SK-N-SH (cell line): ENCODE measurements at regions of chr12 and their contacts with region 1.

Region 1: GRCh38 chr12:8544295-8544694 is 3.6 kb upstream of the CLEC4E start:
- DNase-seq: peak; percentile 49
- H3K4me3 ChIP-seq: peak overlapping the region in 1 of 2 experiments; percentile 45; a peak in 1 of 4 replicates
- H3K27ac ChIP-seq: no peak overlapping the region
- H3K4me1 ChIP-seq: no peaks in the 10 kb centered on the region
- H3K27me3 ChIP-seq: no peaks in the 10 kb centered on the region; the same call in 1 of the 2 replicates
- CTCF ChIP-seq: peak; percentile 97
- EP300 ChIP-seq: no peak
- RAD21 ChIP-seq: peak; percentile 68

Region 2: GRCh38 chr12:8527250-8528130 is 16.8 kb before region 1 on chr12:
- CTCF ChIA-PET with region 1: interaction called, 23 read pairs
- POLR2A ChIA-PET with region 1: no interaction called
- DNase-seq: no peak
- H3K4me3 ChIP-seq: no peak overlapping the region
- H3K27ac ChIP-seq: no peak overlapping the region
- H3K4me1 ChIP-seq: no peaks in the 10 kb centered on the region
- H3K27me3 ChIP-seq: no peaks in the 10 kb centered on the region; the same call in 1 of the 2 replicates
- CTCF ChIP-seq: no peak
- EP300 ChIP-seq: no peak
- RAD21 ChIP-seq: no peak

Region 3: DNA sequence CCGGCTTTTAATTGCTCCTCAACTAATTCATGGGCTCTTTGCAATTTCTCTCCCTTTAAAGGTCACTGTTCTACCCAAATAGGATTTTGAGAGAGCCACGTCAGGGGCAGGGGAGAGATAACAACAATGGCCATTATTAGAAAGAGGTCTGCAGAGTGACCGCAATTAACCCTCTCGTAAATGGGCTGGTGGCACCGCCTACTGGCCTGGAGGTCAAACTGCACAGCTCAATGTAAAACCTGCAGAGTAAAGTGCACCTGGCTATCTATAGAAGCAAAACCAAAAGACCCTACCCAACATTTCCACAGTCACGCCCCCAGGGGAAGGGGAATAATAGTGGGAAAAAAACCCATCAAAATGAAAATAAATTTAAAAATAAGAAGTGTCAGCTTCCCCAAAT is 18.0 kb after region 1 on chr12:
- CTCF ChIA-PET with region 1: interaction called, 31 read pairs
- POLR2A ChIA-PET with region 1: no interaction called
- DNase-seq: no peak
- H3K4me3 ChIP-seq: no peak overlapping the region
- H3K27ac ChIP-seq: no peak overlapping the region
- H3K4me1 ChIP-seq: no peaks in the 10 kb centered on the region
- H3K27me3 ChIP-seq: no peaks in the 10 kb centered on the region
- CTCF ChIP-seq: peak; percentile 47
- EP300 ChIP-seq: no peak
- RAD21 ChIP-seq: no peak

Region 4: DNA sequence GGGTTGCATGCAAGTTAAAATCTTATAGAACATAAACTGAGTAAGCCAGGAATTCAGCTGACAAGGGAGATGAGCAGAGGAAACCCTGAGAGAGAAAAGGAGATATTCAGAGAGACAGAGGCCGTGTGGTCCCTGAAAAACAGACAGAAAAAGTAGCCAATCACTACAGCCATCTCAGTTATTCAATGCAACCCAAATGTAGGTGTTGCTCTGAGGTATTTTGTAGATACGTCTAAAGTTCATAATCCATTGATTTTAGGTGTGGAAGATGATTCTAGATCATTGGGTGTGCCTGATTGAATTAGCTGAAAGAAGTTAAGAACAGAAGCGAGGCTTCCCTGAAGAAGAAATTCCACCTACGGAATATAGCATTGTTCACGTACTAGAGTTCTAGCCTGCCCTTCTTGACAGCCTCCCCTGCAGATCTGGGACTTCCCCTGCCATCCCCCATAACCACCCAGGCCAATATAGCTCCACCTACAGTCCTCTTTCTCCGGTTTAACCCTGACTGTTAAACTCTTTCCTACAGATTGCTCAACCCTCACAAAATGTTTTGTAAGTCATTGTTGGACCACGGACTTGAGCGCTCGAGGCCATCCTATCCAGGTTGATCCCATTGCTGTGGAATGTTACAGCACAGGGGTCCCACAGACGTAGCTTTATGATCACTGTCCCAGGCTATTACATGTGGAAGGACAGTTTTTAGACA is 46.7 kb after region 1 on chr12:
- CTCF ChIA-PET with region 1: interaction called, 18 read pairs
- POLR2A ChIA-PET with region 1: no interaction called
- DNase-seq: no peak
- H3K4me3 ChIP-seq: no peak overlapping the region
- H3K27ac ChIP-seq: no peak overlapping the region
- H3K4me1 ChIP-seq: no peaks in the 10 kb centered on the region
- H3K27me3 ChIP-seq: peaks cover 7% of the 10 kb centered on the region; the same call in 1 of the 2 replicates
- CTCF ChIP-seq: no peak
- EP300 ChIP-seq: no peak
- RAD21 ChIP-seq: no peak

Region 5: DNA sequence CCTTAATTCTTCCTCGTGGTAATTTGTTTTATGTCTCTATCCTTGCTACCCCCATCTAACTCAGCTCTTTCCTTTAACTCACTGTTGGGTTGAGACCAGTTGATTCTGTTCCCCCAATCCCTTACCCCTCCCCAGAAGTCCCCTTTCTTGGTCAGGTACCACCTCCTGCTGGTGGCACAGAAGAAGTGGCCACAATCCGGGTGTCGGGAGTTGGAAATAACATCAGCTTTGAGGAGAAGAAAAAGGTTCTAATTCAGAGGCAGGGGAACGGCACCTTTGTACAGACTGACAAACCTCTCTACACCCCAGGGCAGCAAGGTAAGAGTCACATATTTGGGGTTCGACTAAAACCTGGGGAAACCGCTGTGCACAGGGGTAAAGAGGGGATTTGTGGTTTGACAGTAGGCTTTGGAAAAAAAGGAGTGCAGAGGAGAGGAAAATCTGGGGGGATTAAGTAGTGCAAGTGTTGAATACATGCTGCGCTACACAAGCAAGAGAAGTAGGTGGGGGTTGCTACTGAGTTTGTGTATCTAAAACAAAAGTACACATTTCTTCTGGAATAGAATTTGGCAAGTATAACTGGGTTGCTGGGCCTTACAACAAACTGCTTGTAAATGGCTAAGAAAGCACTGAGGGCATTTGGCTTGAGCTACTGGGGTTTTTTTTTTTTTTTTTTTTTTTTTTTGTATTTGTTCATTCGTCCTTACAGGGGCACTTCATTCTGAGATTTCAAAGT is 279.4 kb after region 1 on chr12:
- CTCF ChIA-PET with region 1: interaction called, 11 read pairs
- POLR2A ChIA-PET with region 1: no interaction called
- DNase-seq: peak; percentile 69
- H3K4me3 ChIP-seq: peak overlapping the region in 1 of 2 experiments; percentile 40; a peak in 1 of 4 replicates
- H3K27ac ChIP-seq: no peak overlapping the region
- H3K4me1 ChIP-seq: no peaks in the 10 kb centered on the region; a peak in 1 of 4 replicates
- H3K27me3 ChIP-seq: no peaks in the 10 kb centered on the region; the same call in 1 of the 2 replicates
- CTCF ChIP-seq: peak; percentile 61
- EP300 ChIP-seq: no peak
- RAD21 ChIP-seq: peak; percentile 88